Vagina (tissue), 2 donors: ENCODE measurements at regions of chr9 and their contacts with region 1.

Region 1: DNA sequence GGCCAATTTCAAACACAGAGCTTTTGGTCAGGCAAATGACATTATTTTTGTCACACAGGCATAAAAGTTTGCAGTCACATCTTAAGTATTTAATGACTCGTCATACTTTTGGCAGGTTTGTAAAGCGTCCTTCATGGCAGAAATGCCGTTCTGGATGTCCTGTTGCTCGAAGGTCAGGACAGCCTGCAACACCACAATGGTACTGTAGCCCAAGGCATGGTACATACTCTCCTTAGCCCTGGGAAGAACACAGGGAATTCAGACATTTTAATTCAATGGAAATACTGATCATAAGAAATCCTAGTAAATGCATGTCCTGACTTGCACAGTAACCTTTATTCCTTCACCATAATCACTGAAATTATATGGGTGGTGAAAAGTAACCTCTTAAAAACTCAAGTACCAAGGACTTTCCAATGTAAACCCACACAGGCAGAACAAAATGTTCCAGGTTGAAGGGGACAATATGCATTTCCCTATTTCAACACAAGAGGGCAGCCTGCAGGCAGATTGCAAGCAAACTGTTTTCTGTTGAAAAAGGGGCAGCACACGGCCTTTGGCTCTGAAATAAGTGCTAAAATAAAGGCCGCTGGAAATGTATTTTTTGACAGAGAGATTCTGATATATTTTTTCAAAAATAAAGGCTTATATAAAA is 95.7 kb downstream of the TTC39B start:
- DNase-seq: no peak
- H3K4me3 ChIP-seq: no peak overlapping the region
- H3K27ac ChIP-seq: peak overlapping the region; percentile 4
- H3K4me1 ChIP-seq: peaks cover 12% of the 10 kb centered on the region
- H3K27me3 ChIP-seq: no peaks in the 10 kb centered on the region
- CTCF ChIP-seq: peak; percentile 70 to 90 (median 73)
- POLR2A ChIP-seq: no peak

Region 2: DNA sequence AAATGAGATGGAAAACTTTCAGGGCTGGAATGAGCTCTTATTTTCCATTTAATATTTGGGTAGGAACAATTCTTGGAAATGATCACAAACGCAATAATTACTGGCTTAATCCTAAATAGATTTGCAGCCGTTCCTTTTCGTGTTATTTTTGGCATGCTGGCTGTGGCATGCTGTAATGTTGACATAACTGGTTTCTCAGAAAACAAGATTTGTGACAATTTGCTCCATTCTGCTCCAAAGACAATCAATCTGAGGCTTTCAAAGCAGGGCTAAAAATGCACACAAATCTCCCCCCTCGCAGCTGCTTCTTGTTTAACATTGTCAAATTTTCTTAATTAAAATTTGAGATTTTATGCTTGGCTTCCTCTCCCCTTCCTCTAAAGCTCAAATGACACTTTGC is 55.5 kb before region 1 on chr9:
- intact Hi-C with region 1: loop called (anchors 10 kb)
- DNase-seq: no peak
- H3K4me3 ChIP-seq: no peak overlapping the region
- H3K27ac ChIP-seq: no peak overlapping the region
- H3K4me1 ChIP-seq: peaks cover 12% of the 10 kb centered on the region
- H3K27me3 ChIP-seq: no peaks in the 10 kb centered on the region
- CTCF ChIP-seq: no peak
- POLR2A ChIP-seq: no peak

Region 3: DNA sequence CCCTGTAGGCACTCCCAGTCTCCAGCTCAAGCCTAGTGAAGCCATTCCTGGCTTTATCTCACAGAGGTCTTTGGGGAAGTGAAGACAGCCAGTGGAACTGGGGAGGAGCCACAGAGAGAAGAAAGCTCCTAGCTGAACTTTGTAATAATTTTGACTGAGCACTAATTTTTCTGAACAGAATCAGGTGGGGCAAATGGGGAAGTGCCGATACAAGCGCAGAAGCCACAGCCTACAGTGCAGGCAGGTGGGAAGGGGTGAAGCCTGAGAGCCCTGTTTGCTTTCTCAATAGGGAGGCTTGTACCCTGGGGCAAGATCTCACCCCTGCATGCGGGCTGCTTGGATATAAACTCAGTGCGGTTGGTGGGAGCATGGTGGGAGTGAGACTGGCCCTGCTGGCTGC is 163.0 kb after region 1 on chr9:
- intact Hi-C with region 1: no loop called
- DNase-seq: no peak
- H3K4me3 ChIP-seq: no peak overlapping the region
- H3K27ac ChIP-seq: peak overlapping the region; percentile 2
- H3K4me1 ChIP-seq: peaks cover 4% of the 10 kb centered on the region
- H3K27me3 ChIP-seq: no peaks in the 10 kb centered on the region
- CTCF ChIP-seq: no peak
- POLR2A ChIP-seq: no peak

Region 4: DNA sequence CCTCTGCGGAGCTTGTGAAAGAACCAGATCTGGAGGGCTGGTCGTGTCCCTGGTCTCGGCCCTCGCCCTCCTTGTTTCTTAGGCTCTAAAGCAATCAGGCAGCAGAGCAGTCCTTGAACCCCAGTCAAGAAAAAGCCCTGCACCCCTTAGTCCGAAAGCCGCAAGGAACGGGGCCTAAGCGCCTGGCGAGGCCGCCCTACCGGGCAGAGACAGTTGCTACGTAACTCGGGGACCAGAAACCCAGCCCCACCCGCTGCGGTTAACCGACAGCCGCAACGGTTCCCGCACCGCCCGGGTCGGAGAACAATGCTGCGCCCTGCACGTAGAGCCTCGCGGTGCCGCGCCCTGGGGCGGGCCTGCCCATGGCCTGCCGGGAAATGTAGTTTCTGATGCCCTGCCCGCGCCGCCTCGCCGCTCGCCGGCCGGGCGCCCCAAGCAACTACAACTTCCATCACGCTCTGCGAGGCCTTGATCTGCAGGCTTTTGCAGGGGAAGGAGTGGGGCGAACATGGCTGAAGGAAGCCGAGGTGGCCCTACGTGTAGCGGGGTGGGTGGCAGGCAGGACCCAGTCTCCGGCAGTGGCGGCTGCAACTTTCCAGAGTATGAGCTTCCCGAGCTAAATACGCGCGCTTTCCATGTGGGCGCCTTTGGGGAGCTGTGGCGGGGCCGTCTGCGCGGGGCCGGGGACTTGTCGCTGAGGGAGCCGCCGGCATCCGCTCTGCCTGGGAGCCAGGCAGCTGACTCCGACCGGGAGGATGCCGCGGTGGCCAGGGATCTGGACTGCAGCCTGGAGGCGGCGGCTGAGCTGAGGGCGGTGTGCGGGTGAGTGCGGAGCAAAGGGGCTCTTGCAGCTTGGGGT is 211.3 kb after region 1 on chr9 and contains the start of gene SNAPC3:
- intact Hi-C with region 1: loop called (anchors 10 kb)
- DNase-seq: peak in 1 of 2 donors; percentile 94
- H3K4me3 ChIP-seq: peak within 1 kb of the TSS; percentile 60 to 94
- H3K27ac ChIP-seq: peak within 1 kb of the TSS; percentile 91
- H3K4me1 ChIP-seq: peaks cover 45% of the 10 kb centered on the region
- H3K27me3 ChIP-seq: no peaks in the 10 kb centered on the region
- CTCF ChIP-seq: no peak
- POLR2A ChIP-seq: peak in 1 of 2 donors; percentile 37
- total RNA-seq, gene SNAPC3: 22.6 TPM

Region 5: DNA sequence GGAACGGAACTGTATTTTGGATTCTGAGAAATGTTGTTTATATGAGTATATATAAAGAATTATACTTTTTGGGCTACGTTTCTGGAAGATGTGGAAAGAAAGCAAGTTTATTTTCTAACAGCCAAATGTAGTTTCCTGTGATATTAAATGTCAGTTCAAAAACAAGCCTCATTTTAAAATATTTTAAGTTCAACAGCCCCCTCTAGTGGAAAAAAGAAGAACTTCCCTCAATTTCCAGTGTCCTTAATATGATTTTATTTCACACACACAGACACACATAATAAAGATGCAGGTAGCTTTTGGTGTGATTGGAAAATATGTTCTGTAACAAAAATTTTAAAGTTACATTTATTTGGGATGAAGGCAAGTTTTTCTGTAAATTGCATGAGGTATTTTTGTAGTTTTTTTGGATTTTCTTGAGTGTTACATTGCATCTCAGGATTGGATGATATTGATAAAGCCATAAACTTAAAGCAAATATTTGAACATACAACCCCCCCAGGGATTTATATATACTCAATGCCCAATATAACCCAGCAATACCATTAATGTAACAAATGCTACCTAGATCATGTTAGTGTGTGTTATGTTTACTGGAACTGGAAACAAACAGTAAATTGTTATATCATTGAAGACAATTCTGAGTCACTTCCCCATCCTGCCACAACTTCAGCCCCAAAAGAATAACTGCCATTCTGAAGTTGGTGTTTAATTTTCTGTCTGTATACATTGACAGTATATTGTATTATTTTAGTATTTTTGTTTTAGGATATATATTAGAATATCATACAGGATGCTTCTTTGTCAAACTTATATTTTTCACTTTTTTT is 395.6 kb after region 1 on chr9:
- intact Hi-C with region 1: loop called (anchors 2 kb)
- DNase-seq: no peak
- H3K4me3 ChIP-seq: no peak overlapping the region
- H3K27ac ChIP-seq: no peak overlapping the region
- H3K4me1 ChIP-seq: no peaks in the 10 kb centered on the region
- H3K27me3 ChIP-seq: no peaks in the 10 kb centered on the region
- CTCF ChIP-seq: peak; percentile 48 to 73 (median 71)
- POLR2A ChIP-seq: no peak